ENCODE measurements at regions of chr14 and their contacts with region 1.

Region 1: DNA sequence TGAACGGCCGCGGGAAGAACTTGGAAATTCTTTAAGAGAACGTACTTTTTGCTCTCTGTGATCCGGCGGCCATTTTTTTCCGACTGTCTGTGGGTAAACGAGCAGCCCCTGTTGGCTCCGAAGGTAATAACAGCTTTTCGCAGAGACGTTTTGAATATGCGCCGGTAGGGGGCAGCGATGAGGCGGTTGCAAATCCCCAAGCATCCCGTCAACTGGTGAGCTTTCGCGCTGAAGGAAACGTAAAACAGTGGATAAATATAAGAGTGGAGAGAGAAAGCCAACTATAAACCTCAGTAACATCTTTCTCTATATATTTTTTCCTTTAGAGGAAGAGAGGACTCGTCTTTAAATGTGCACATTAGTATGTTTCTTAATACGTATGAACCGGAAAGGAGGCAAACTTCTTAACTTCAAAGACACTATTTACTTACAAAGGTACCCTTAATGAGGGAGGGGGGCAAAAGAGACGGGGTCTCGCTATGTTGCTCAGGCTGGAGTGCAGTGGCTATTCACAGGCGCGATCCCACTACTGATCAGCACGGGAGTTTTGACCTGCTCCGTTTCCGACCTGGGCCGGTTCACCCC is 9.6 kb upstream of the NEMF start:
- DNase-seq: peak; percentile 88
- H3K4me3 Mint-ChIP-seq: no peak overlapping the region
- H3K27ac Mint-ChIP-seq: no peak overlapping the region
- H3K4me1 Mint-ChIP-seq: peaks cover 33% of the 10 kb centered on the region
- H3K27me3 Mint-ChIP-seq: peaks cover 8% of the 10 kb centered on the region

Region 2: GRCh38 chr14:49879683-49880204 is 17.6 kb after region 1 on chr14:
- CTCF ChIA-PET with region 1: interaction called, 11 read pairs
- DNase-seq: peak; percentile 69
- H3K4me3 Mint-ChIP-seq: no peak overlapping the region
- H3K27ac Mint-ChIP-seq: peak overlapping the region; percentile 68
- H3K4me1 Mint-ChIP-seq: peaks cover 30% of the 10 kb centered on the region
- H3K27me3 Mint-ChIP-seq: peaks cover 4% of the 10 kb centered on the region

Region 3: GRCh38 chr14:50003213-50004031 is 141.2 kb after region 1 on chr14:
- CTCF ChIA-PET with region 1: interaction called, 23 read pairs
- DNase-seq: peak; percentile 87
- H3K4me3 Mint-ChIP-seq: peak overlapping the region; percentile 78
- H3K27ac Mint-ChIP-seq: peak overlapping the region; percentile 98
- H3K4me1 Mint-ChIP-seq: peaks cover 83% of the 10 kb centered on the region
- H3K27me3 Mint-ChIP-seq: no peaks in the 10 kb centered on the region

Region 4: DNA sequence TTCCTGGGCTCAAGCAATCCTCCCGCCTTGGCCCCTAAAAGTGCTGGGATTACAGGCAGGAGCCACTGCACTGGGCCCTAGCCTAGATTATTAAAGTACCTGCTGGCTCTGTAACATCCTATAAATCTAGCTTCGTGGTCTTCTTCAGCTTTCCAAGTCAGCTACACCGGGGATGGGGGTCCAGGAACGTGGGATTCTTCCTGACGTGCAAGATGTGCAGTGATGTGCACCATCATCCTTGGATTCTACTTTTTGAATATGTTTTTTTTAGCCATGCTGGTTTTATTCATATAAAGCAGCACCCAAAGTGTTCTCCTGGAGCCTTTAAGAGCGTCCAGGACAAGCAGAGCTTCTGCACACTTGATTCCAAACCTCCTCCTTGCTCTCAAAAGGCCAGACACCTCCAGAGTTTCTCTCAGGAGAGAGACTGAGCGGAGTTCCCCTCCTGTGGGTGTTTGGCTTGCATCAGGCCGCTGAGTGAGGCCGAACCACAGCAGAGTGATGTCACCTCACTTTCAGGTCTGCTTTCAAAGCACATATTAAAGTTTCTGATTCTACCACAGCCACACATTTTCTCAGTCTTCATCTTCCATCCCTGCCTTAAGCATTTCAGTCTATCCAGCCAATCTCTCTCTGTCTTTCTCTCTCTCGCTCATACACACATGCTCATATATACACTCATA is 220.7 kb after region 1 on chr14:
- CTCF ChIA-PET with region 1: interaction called, 12 read pairs
- DNase-seq: peak; percentile 91
- H3K4me3 Mint-ChIP-seq: peak overlapping the region; percentile 73
- H3K27ac Mint-ChIP-seq: peak overlapping the region; percentile 97
- H3K4me1 Mint-ChIP-seq: peaks cover 76% of the 10 kb centered on the region
- H3K27me3 Mint-ChIP-seq: no peaks in the 10 kb centered on the region

Region 5: GRCh38 chr14:50099335-50099734 is 237.2 kb after region 1 on chr14:
- CTCF ChIA-PET with region 1: interaction called, 17 read pairs
- DNase-seq: no peak
- H3K4me3 Mint-ChIP-seq: no peak overlapping the region
- H3K27ac Mint-ChIP-seq: no peak overlapping the region
- H3K4me1 Mint-ChIP-seq: peaks cover 82% of the 10 kb centered on the region
- H3K27me3 Mint-ChIP-seq: no peaks in the 10 kb centered on the region

Region 6: DNA sequence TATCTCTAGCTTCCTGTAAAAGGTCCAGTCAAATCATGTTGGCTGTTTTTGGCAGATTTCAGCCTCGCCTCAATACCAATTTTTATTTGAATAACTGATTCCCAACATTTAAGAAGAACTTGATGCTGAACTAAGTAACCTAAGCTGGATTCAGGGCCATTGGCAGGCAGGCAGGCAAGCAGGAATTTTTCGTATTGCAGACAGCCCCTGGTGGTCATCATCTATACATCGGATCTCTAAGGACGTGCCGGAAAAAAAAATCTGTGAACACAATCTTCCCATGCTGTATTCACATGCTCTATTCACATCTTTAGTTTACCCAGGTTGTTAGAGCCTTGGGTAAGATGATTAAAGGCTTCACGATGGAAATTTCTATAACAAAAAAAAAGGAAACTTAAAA is 247.2 kb after region 1 on chr14:
- CTCF ChIA-PET with region 1: interaction called, 17 read pairs
- DNase-seq: no peak
- H3K4me3 Mint-ChIP-seq: no peak overlapping the region
- H3K27ac Mint-ChIP-seq: no peak overlapping the region
- H3K4me1 Mint-ChIP-seq: peaks cover 28% of the 10 kb centered on the region
- H3K27me3 Mint-ChIP-seq: no peaks in the 10 kb centered on the region